Calu3 (cell line): ENCODE measurements at regions of chr22 and their contacts with region 1.

Region 1: GRCh38 chr22:33302049-33302545 is 243.9 kb upstream of the SYN3 start:
- DNase-seq: peak; percentile 92
- H3K4me3 Mint-ChIP-seq: no peak overlapping the region
- H3K27ac Mint-ChIP-seq: no peak overlapping the region
- H3K4me1 Mint-ChIP-seq: peaks cover 10% of the 10 kb centered on the region
- H3K27me3 Mint-ChIP-seq: no peaks in the 10 kb centered on the region
- CTCF ChIP-seq: peak; percentile 97

Region 2: GRCh38 chr22:32866953-32867352 is 435.1 kb before region 1 on chr22:
- CTCF ChIA-PET with region 1: no interaction called
- intact Hi-C with region 1: no loop called
- DNase-seq: no peak
- H3K4me3 Mint-ChIP-seq: no peak overlapping the region
- H3K27ac Mint-ChIP-seq: no peak overlapping the region
- H3K4me1 Mint-ChIP-seq: no peaks in the 10 kb centered on the region
- H3K27me3 Mint-ChIP-seq: peaks cover 46% of the 10 kb centered on the region
- CTCF ChIP-seq: no peak

Region 3: DNA sequence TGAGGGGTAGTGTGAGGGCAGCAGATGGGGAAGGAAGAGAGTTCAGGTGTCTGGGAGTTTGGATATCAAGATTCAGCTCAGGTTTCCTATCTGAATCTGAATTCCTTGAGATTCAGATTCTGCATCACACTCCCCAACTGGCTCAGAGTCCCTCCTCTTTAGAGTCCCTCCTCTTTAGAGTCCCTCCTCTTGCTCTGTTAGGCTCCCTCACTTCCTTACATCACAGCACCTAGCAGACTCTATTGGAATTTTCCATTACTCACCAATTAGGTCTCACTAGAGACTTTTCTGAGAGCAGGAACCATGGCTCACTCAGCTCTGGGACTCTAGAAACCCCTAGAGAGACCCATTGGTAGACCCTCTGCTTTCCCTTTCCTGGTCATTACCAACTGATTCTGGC is 59.5 kb after region 1 on chr22:
- CTCF ChIA-PET with region 1: no interaction called
- intact Hi-C with region 1: no loop called
- DNase-seq: no peak
- H3K4me3 Mint-ChIP-seq: no peak overlapping the region
- H3K27ac Mint-ChIP-seq: no peak overlapping the region
- H3K4me1 Mint-ChIP-seq: no peaks in the 10 kb centered on the region
- H3K27me3 Mint-ChIP-seq: no peaks in the 10 kb centered on the region
- CTCF ChIP-seq: no peak

Region 4: GRCh38 chr22:33467620-33468095 is 165.6 kb after region 1 on chr22:
- CTCF ChIA-PET with region 1: interaction called, 14 read pairs
- intact Hi-C with region 1: loop called (anchors 5 kb)
- DNase-seq: no peak
- H3K4me3 Mint-ChIP-seq: no peak overlapping the region
- H3K27ac Mint-ChIP-seq: no peak overlapping the region
- H3K4me1 Mint-ChIP-seq: peaks cover 15% of the 10 kb centered on the region
- H3K27me3 Mint-ChIP-seq: no peaks in the 10 kb centered on the region
- CTCF ChIP-seq: no peak

Region 5: DNA sequence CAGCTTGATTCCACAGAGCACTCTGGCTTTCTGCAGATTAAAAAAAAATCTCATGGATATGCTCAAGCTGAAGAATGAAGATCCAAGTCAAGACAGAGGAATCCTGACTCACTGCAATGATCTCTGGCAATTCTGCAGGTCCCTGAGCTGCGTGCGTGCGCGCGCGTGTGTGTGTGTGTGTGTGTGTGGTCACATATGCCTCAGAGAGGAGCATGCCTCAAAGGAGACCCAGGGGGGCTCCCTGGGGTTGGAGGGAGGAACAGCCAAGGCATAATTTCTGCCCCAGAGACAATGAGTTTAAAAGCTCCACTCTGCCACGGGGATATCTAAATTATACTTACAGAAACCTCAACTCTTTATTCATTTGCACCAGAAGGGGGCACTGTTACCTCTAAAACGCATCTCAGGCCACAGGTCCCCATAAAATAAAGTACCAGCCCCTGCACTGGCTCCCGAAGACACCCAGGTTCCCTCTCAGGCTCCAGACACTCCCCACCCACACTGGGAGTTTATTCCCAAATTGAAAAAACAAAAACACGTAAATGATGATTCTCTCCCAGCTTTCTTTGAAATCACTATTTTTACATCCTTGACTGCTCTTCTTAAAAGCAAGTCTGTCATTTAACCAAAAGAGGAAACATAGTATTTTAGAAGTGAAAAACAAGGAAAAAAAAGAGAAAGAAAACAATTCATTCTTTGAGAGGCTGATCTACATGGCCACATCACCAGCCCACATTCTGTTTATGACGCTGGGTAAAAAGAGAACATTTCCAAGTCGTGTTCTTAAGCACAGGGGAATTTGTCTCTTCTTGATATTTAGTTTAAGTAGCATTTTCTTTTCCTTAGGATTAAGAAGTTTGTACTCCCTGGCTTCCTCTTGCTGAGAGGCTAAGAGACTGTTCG is 217.2 kb after region 1 on chr22:
- CTCF ChIA-PET with region 1: interaction called, 13 read pairs
- intact Hi-C with region 1: loop called (anchors 1 kb)
- DNase-seq: peak; percentile 52
- H3K4me3 Mint-ChIP-seq: no peak overlapping the region
- H3K27ac Mint-ChIP-seq: no peak overlapping the region
- H3K4me1 Mint-ChIP-seq: peaks cover 34% of the 10 kb centered on the region
- H3K27me3 Mint-ChIP-seq: no peaks in the 10 kb centered on the region
- CTCF ChIP-seq: peak; percentile 58

Region 6: DNA sequence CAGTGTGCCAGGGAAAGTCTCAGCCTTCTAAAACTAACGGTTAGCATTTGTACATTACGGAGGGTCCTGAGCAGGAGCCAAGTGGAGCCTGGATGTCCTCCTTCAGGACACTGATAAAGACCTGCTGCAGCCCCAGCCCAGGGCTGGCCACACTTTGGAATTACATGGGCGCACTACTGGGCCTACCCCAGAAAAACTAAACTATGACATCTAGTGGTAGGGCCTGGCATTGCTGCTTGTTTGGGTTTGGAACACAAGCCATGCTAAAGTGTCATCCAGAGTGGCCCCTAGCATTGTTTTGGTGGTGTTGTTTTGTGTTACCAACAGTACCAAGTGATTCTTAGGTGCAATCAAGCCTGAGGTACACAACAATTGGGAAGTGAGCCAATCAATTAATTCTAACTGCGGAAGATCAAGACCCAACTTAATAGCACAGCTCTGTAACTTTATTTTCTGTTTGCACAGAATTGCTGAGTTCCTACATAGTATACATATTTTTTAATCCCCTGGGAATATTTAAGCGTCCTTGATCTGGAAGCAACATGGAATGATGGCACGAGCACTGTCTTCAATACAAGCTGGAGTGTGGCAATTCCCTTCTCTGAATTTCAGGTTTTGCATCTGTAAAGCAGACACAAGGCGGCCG is 277.5 kb after region 1 on chr22:
- CTCF ChIA-PET with region 1: interaction called, 4 read pairs
- intact Hi-C with region 1: loop called (anchors 1 kb)
- DNase-seq: peak; percentile 81
- H3K4me3 Mint-ChIP-seq: no peak overlapping the region
- H3K27ac Mint-ChIP-seq: peak overlapping the region; percentile 36
- H3K4me1 Mint-ChIP-seq: peaks cover 27% of the 10 kb centered on the region
- H3K27me3 Mint-ChIP-seq: no peaks in the 10 kb centered on the region
- CTCF ChIP-seq: peak; percentile 94

Region 7: DNA sequence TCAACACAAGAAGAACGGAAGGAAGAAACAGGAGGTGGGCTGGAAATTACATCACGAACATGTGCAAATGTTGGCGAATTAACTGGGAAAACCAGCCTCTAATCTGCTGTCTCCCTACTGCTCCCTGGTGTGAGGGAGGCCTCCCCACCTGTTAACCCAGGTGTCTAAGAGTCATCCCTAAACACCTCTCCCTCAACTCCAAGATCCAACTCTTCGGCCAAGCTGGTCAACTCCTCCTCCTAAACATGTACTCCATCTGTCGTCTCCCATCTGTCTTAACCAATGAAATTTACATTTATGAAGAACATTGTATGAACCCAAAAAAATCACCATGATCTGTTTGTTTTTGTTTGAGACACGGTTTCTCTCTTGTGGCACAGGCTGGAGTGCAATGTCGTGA is 464.0 kb after region 1 on chr22:
- CTCF ChIA-PET with region 1: interaction called, 10 read pairs
- intact Hi-C with region 1: no loop called
- DNase-seq: no peak
- H3K4me3 Mint-ChIP-seq: no peak overlapping the region
- H3K27ac Mint-ChIP-seq: no peak overlapping the region
- H3K4me1 Mint-ChIP-seq: no peaks in the 10 kb centered on the region
- H3K27me3 Mint-ChIP-seq: no peaks in the 10 kb centered on the region
- CTCF ChIP-seq: no peak